Activated CD4-positive, alpha-beta T cell treated with anti-CD3 and anti-CD28 coated beads, Interleukin-2, amount 10 ng/mL, durations not matched to agents 24 days and 14 days (primary cell): ENCODE measurements at regions of chr20 and their contacts with region 1.

Region 1: GRCh38 chr20:34922654-34923424 is 32.8 kb downstream of the GSS start:
- DNase-seq: no peak
- H3K4me3 Mint-ChIP-seq: no peak overlapping the region
- H3K27ac Mint-ChIP-seq: no peak overlapping the region
- H3K4me1 Mint-ChIP-seq: peaks cover 38% of the 10 kb centered on the region
- H3K27me3 Mint-ChIP-seq: no peaks in the 10 kb centered on the region

Region 2: DNA sequence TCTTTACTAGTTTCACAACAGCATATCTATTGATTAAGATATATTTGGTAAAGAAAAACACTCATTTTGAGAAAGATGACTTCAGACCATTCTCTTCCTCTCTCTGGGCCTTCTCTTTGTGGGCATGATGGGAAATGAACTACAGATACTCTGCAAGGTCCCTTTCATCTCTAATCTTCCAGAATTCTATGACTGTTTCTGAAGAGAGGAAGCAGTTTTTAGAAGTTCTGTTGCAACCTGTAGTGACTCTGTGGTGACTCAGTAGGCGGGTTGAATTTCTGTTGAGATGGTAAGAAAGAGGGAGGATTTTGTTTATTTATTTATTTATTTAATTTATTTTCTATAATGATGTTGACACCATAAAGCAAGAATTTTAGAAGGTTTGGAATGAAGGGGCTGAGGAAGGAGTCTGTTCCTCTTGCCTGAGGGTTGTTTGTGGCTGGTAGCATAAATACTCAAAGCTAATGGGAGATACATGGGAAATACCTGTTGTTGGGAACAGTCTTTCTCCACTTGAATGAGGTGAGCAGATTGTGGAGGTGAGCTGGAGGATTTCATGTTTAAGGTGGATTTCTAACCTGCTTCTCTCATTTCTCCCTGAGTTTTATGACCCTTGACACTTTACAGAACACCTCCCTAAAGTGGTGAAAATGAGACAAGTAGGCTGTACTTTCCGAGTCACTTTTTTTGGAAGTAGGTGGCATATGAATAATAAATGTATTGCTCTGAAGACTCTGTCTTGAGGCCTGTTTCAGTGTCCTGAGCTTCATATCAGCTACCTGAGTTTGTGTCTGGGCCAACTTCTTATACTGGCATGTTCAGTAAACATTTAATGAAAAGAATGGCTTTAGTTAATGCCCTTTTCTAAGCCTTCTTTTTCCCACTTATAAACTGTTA is 31.4 kb before region 1 on chr20:
- intact Hi-C with region 1: loop called (anchors 1 kb)
- DNase-seq: peak; percentile 75
- H3K4me3 Mint-ChIP-seq: peak overlapping the region; percentile 46
- H3K27ac Mint-ChIP-seq: peak overlapping the region; percentile 90
- H3K4me1 Mint-ChIP-seq: peaks cover 49% of the 10 kb centered on the region
- H3K27me3 Mint-ChIP-seq: no peaks in the 10 kb centered on the region

Region 3: GRCh38 chr20:35385733-35386132 is 462.9 kb after region 1 on chr20:
- intact Hi-C with region 1: no loop called
- DNase-seq: no peak
- H3K4me3 Mint-ChIP-seq: no peak overlapping the region
- H3K27ac Mint-ChIP-seq: no peak overlapping the region
- H3K4me1 Mint-ChIP-seq: peaks cover 2% of the 10 kb centered on the region
- H3K27me3 Mint-ChIP-seq: no peaks in the 10 kb centered on the region